CD14-positive monocyte (primary cell): ENCODE measurements at regions of chr1 and their contacts with region 1.

Region 1: GRCh38 chr1:218521375-218522169 is 176.4 kb downstream of the TGFB2 start:
- DNase-seq: peak; percentile 37 to 59 (median 46)
- H3K4me3 ChIP-seq: no peak overlapping the region
- H3K4me3 Mint-ChIP-seq: no peak overlapping the region
- H3K27ac ChIP-seq: no peak overlapping the region
- H3K27ac Mint-ChIP-seq: peak overlapping the region in 1 of 7 donors; percentile 42
- H3K4me1 ChIP-seq: peaks cover 3 to 9% of the 10 kb centered on the region in 2 donors
- H3K4me1 Mint-ChIP-seq: peaks cover 10% of the 10 kb centered on the region
- H3K27me3 ChIP-seq: no peaks in the 10 kb centered on the region
- H3K27me3 Mint-ChIP-seq: peaks cover 0 to 13% (median 11%) of the 10 kb centered on the region in 3 donors
- CTCF ChIP-seq: peak; percentile 90

Region 2: GRCh38 chr1:218339267-218339831 is 182.2 kb before region 1 on chr1:
- intact Hi-C with region 1: loop called in 1 of 2 experiments (anchors 5 kb)
- DNase-seq: peak in 2 of 3 donors; percentile 20 to 38
- H3K4me3 ChIP-seq: no peak overlapping the region
- H3K4me3 Mint-ChIP-seq: no peak overlapping the region
- H3K27ac ChIP-seq: no peak overlapping the region
- H3K27ac Mint-ChIP-seq: no peak overlapping the region
- H3K4me1 ChIP-seq: no peaks in the 10 kb centered on the region
- H3K4me1 Mint-ChIP-seq: no peaks in the 10 kb centered on the region
- H3K27me3 ChIP-seq: peaks cover 13 to 16% of the 10 kb centered on the region in 2 donors
- H3K27me3 Mint-ChIP-seq: peaks cover 2 to 7% (median 6%) of the 10 kb centered on the region in 3 donors
- CTCF ChIP-seq: peak; percentile 84